ENCODE measurements at regions of chr4 and their contacts with region 1.

Region 1: DNA sequence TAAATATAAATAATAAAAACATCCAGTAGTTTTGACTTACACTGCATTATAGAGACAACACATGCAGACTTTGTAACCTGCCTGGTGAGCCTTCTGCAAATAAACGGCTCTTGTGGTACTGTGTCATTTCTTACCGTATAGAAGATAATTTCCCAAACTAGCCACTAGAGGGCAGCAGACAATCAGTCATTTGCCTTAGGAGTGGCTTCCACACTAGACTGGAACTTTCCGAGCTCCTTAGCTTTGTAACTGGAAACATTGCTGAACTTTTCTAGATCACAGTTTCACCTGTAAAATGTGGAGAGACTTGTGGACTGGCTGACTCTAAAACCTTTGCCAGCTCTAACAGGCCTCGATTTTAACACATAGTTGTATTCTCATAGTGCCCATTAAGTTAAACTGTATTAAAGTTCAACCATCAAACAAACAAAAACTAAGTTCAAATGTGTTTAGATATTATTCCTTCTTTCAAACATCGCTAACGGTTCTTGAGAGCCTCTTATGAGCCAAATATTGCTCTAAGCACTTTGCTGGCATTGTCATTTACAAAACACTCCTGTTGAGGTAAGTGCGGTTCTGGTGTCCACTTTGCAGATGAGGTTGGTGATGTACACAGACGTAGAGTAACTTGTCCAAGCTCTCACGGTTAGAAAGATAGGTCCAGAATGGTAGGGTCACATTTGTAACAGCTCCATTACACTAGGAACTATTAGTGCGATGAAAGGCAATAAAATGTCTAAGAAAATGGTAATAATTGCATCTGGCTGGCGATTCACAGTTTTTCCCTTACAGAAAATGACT is 345.5 kb downstream of the ANK2 start:
- DNase-seq: peak; percentile 57 to 80
- H3K4me3 ChIP-seq: no peak overlapping the region
- H3K4me3 Mint-ChIP-seq: no peak overlapping the region
- H3K27ac Mint-ChIP-seq: no peak overlapping the region
- H3K4me1 ChIP-seq: peaks cover 19% of the 10 kb centered on the region
- H3K4me1 Mint-ChIP-seq: peaks cover 7% of the 10 kb centered on the region
- H3K27me3 ChIP-seq: no peaks in the 10 kb centered on the region
- H3K27me3 Mint-ChIP-seq: no peaks in the 10 kb centered on the region
- CTCF ChIP-seq: peak; percentile 52 to 84

Region 2: DNA sequence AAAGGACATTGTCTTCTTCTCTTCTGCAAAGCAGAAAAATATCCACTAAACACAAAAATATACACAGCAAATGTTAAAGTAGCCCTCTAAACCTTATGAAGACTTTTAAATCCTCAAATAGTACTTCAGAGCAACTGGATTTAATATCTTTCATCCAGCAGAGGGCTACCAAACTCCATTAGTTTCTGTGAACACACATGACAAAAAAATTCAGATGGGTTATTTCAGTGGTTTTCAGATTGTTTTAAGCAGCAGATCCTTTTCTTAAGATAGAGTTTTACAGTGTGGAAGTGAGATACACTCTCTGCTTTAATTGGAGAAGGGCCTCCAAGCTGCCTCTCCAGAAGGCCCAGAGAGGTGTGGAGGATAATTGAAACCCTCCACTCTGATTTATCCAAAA is 288.8 kb before region 1 on chr4:
- CTCF ChIA-PET with region 1: no interaction called
- POLR2A ChIA-PET with region 1: no interaction called
- intact Hi-C with region 1: loop called (anchors 1 kb)
- DNase-seq: peak in 1 of 2 experiments; percentile 41
- H3K4me3 ChIP-seq: no peak overlapping the region
- H3K4me3 Mint-ChIP-seq: no peak overlapping the region
- H3K27ac Mint-ChIP-seq: no peak overlapping the region
- H3K4me1 ChIP-seq: peaks cover 29% of the 10 kb centered on the region
- H3K4me1 Mint-ChIP-seq: peaks cover 20% of the 10 kb centered on the region
- H3K27me3 ChIP-seq: no peaks in the 10 kb centered on the region
- H3K27me3 Mint-ChIP-seq: no peaks in the 10 kb centered on the region
- CTCF ChIP-seq: peak; percentile 41 to 50

Region 3: DNA sequence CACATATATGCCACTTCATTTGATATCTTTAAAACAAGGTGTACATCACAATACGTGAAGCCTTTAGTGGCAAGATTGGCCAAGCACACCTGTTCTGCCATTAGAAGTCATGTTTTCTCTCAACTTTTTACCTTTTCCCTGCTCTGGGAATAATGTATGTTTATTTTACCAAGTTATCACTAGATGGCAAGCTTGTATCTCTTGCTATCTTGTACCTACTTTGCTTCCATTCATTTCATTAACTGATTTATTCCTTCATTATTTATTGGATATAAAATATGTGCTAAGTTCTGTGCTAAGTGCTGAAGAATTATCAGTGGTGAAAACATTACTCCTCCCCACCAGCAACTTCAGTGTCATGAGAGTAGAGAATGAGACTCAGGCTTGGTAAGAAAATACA is 100.0 kb before region 1 on chr4:
- CTCF ChIA-PET with region 1: no interaction called
- POLR2A ChIA-PET with region 1: no interaction called
- intact Hi-C with region 1: loop called (anchors 1 kb)
- DNase-seq: no peak
- H3K4me3 ChIP-seq: no peak overlapping the region
- H3K4me3 Mint-ChIP-seq: no peak overlapping the region
- H3K27ac Mint-ChIP-seq: no peak overlapping the region
- H3K4me1 ChIP-seq: no peaks in the 10 kb centered on the region
- H3K4me1 Mint-ChIP-seq: no peaks in the 10 kb centered on the region
- H3K27me3 ChIP-seq: no peaks in the 10 kb centered on the region
- H3K27me3 Mint-ChIP-seq: no peaks in the 10 kb centered on the region
- CTCF ChIP-seq: no peak

Region 4: GRCh38 chr4:113513382-113513781 is 118.5 kb after region 1 on chr4:
- CTCF ChIA-PET with region 1: no interaction called
- POLR2A ChIA-PET with region 1: no interaction called
- intact Hi-C with region 1: no loop called
- DNase-seq: no peak
- H3K4me3 ChIP-seq: no peak overlapping the region
- H3K4me3 Mint-ChIP-seq: no peak overlapping the region
- H3K27ac Mint-ChIP-seq: no peak overlapping the region
- H3K4me1 ChIP-seq: no peaks in the 10 kb centered on the region
- H3K4me1 Mint-ChIP-seq: no peaks in the 10 kb centered on the region
- H3K27me3 ChIP-seq: no peaks in the 10 kb centered on the region
- H3K27me3 Mint-ChIP-seq: no peaks in the 10 kb centered on the region
- CTCF ChIP-seq: no peak

Region 5: DNA sequence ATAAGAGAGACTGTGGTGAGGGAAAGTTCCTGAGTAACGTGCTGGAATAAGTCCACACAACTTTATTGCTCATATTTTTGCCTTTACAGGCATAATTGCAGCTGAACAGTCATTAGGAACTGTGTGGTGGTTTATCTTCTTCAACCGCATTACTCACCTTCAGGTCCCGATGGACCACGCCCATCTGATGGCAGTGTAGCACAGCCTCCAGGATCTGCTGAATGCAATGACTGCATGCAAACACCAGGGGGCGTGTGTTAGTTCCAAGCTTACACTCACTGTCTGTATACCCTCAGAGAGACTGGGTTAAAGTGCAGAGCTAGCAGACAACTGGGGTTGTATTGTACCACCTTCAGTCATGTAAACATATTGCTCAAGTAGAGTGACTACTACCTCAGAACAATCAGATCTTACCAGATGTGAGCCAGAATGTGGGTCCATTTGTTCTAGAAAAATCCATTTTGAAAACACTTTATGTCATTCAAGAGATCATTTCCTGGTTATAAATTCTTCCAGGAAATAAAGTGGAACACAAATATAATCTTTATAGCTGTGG is 152.6 kb after region 1 on chr4:
- CTCF ChIA-PET with region 1: interaction called, 15 read pairs
- POLR2A ChIA-PET with region 1: no interaction called
- intact Hi-C with region 1: loop called (anchors 1 kb)
- DNase-seq: peak; percentile 92 to 93
- H3K4me3 ChIP-seq: no peak overlapping the region
- H3K4me3 Mint-ChIP-seq: no peak overlapping the region
- H3K27ac Mint-ChIP-seq: no peak overlapping the region
- H3K4me1 ChIP-seq: peaks cover 9% of the 10 kb centered on the region; the same call in 1 of the 2 replicates
- H3K4me1 Mint-ChIP-seq: no peaks in the 10 kb centered on the region
- H3K27me3 ChIP-seq: no peaks in the 10 kb centered on the region
- H3K27me3 Mint-ChIP-seq: no peaks in the 10 kb centered on the region
- CTCF ChIP-seq: peak; percentile 91 to 93

Region 6: GRCh38 chr4:113761620-113762185 is 366.8 kb after region 1 on chr4 and contains the start of gene CAMK2D:
- CTCF ChIA-PET with region 1: no interaction called
- POLR2A ChIA-PET with region 1: no interaction called
- intact Hi-C with region 1: loop called (anchors 1 kb)
- DNase-seq: peak; percentile 91 to 94
- H3K4me3 ChIP-seq: peak within 1 kb of the TSS; percentile 82
- H3K4me3 Mint-ChIP-seq: peak within 1 kb of the TSS; percentile 96
- H3K27ac Mint-ChIP-seq: peak within 1 kb of the TSS; percentile 91
- H3K4me1 ChIP-seq: peaks cover 37% of the 10 kb centered on the region
- H3K4me1 Mint-ChIP-seq: peaks cover 30% of the 10 kb centered on the region
- H3K27me3 ChIP-seq: no peaks in the 10 kb centered on the region
- H3K27me3 Mint-ChIP-seq: no peaks in the 10 kb centered on the region
- CTCF ChIP-seq: peak; percentile 35 to 82
- total RNA-seq, gene CAMK2D: 56.1 and 65.6 TPM in 2 replicates

Region 7: DNA sequence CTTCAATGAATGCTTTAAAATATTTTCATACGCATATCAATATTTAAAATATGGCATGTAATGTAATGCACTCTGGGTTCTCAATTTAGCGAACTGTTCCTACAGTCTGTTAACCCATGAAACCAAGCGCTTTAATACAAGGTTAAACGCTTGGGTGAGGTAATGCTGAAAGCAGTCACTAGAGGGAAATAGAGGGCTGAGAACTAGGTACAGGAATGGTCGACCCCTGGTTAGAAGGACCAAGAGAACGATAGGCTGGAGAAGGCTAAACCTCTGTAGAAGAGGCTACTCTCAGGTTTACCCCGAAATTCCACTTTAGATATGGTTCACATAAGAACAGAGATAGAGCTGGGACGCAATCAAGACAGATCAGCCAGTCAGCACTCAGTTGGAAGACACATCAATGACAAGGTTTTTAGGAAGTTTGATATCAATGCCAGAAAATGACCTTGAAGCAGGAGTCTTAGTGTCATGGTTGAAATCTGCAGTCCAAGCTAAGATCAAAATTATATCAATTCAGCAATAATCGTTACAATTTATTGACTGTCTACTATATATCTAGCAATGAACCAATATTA is 557.6 kb after region 1 on chr4:
- CTCF ChIA-PET with region 1: no interaction called
- POLR2A ChIA-PET with region 1: no interaction called
- intact Hi-C with region 1: loop called (anchors 1 kb)
- DNase-seq: peak; percentile 38 to 66
- H3K4me3 ChIP-seq: no peak overlapping the region
- H3K4me3 Mint-ChIP-seq: no peak overlapping the region
- H3K27ac Mint-ChIP-seq: no peak overlapping the region
- H3K4me1 ChIP-seq: peaks cover 2% of the 10 kb centered on the region
- H3K4me1 Mint-ChIP-seq: peaks cover 8% of the 10 kb centered on the region
- H3K27me3 ChIP-seq: no peaks in the 10 kb centered on the region
- H3K27me3 Mint-ChIP-seq: no peaks in the 10 kb centered on the region
- CTCF ChIP-seq: peak; percentile 65 to 88